HepG2 (cell line): ENCODE measurements at regions of chr17 and their contacts with region 1.

Region 1: GRCh38 chr17:44522883-44523671 is 19.9 kb upstream of the GPATCH8 start:
- DNase-seq: peak; percentile 82
- ATAC-seq: peak; percentile 99
- H3K4me3 ChIP-seq: peak overlapping the region; percentile 39 to 64 (median 45)
- H3K27ac ChIP-seq: no peak overlapping the region
- H3K4me1 ChIP-seq: peaks cover 7% of the 10 kb centered on the region
- H3K27me3 ChIP-seq: no peaks in the 10 kb centered on the region; a peak in 1 of 5 replicates
- CTCF ChIP-seq: peak; percentile 98
- EP300 ChIP-seq: no peak
- POLR2A ChIP-seq: no peak
- RAD21 ChIP-seq: peak; percentile 95

Region 2: GRCh38 chr17:44350733-44351226 is 172.3 kb before region 1 on chr17:
- CTCF ChIA-PET with region 1: interaction called, 3 read pairs
- POLR2A ChIA-PET with region 1: interaction called, 4 read pairs
- in situ Hi-C with region 1: no loop called
- intact Hi-C with region 1: loop called (anchors 10 kb)
- DNase-seq: peak; percentile 57
- ATAC-seq: peak; percentile 75
- H3K4me3 ChIP-seq: no peak overlapping the region
- H3K27ac ChIP-seq: no peak overlapping the region
- H3K4me1 ChIP-seq: peaks cover 15% of the 10 kb centered on the region
- H3K27me3 ChIP-seq: peaks cover 8 to 10% of the 10 kb centered on the region in 2 experiments; a peak in 3 of 5 replicates
- CTCF ChIP-seq: peak; percentile 91
- EP300 ChIP-seq: no peak
- POLR2A ChIP-seq: no peak
- RAD21 ChIP-seq: peak; percentile 91

Region 3: DNA sequence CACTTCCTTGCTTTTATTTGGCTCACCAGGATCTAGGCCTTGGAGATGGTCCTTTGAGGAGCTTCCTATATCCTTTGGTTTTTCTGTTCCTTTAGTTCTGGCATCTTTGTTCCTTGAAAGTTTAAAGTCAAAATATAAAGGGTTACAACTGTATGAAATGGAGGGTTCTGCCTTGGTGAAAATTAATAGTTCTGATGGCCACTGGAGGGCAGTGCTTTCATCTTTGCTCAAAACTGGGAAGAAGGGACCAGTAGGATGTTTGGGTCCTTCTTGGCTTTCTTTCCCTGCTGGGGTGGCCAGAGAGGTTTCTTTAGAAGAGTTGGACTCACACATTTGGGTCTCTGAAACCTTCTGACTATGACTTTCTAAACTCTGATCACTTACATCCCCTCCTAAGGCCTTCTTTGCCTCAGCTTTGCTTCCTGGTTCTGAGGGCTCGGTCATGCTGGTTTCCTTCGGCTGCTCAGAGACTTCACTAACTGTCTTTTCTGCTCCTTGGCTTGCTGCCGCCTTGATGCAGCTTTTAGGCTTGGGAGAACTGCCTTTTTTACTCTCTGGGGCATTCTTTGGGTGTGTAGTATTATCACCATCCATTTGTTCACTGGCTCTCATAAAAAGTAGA is 122.7 kb before region 1 on chr17:
- CTCF ChIA-PET with region 1: interaction called, 34 read pairs
- POLR2A ChIA-PET with region 1: interaction called, 3 read pairs
- in situ Hi-C with region 1: loop called (anchors 5 kb)
- intact Hi-C with region 1: loop called (anchors 1 kb)
- DNase-seq: peak; percentile 34
- ATAC-seq: peak; percentile 62
- H3K4me3 ChIP-seq: no peak overlapping the region
- H3K27ac ChIP-seq: no peak overlapping the region
- H3K4me1 ChIP-seq: no peaks in the 10 kb centered on the region
- H3K27me3 ChIP-seq: no peaks in the 10 kb centered on the region
- CTCF ChIP-seq: peak; percentile 59
- EP300 ChIP-seq: no peak
- POLR2A ChIP-seq: no peak
- RAD21 ChIP-seq: peak; percentile 25; the same call in 1 of the 2 replicates

Region 4: DNA sequence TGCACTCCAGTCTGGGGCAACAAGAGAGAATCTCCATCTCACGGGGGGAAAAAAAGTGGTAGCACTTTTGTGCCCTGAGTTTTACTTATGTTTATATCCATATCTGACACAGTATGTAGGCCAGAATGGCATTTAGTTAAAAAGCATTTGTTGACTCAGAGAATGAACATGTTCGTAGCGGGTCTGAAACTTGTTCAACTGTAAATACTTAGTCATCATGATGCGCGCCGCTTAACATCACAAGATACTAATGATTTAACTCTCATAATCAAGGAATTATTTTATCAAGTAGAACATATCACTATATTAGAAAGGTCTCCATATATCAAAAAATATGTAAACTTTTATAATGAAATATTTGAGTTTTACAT is 78.4 kb before region 1 on chr17:
- CTCF ChIA-PET with region 1: interaction called, 36 read pairs
- POLR2A ChIA-PET with region 1: no interaction called
- in situ Hi-C with region 1: loop called (anchors 5 kb)
- intact Hi-C with region 1: loop called (anchors 2 kb)
- DNase-seq: no peak
- ATAC-seq: no peak
- H3K4me3 ChIP-seq: no peak overlapping the region
- H3K27ac ChIP-seq: no peak overlapping the region
- H3K4me1 ChIP-seq: no peaks in the 10 kb centered on the region
- H3K27me3 ChIP-seq: no peaks in the 10 kb centered on the region; a peak in 1 of 5 replicates
- CTCF ChIP-seq: no peak
- EP300 ChIP-seq: no peak
- POLR2A ChIP-seq: no peak
- RAD21 ChIP-seq: no peak